Esophagus muscularis mucosa (tissue), 4 donors: ENCODE measurements at regions of chr20 and their contacts with region 1.

Region 1: GRCh38 chr20:25294459-25295385 is 46.8 kb downstream of the PYGB start:
- DNase-seq: no peak
- H3K4me3 ChIP-seq: no peak overlapping the region
- H3K27ac ChIP-seq: peak overlapping the region; percentile 72 to 77 (median 74)
- H3K4me1 ChIP-seq: peaks cover 42 to 68% (median 57%) of the 10 kb centered on the region in 4 donors
- H3K27me3 ChIP-seq: no peaks in the 10 kb centered on the region
- CTCF ChIP-seq: peak; percentile 61 to 69 (median 68)
- EP300 ChIP-seq: no peak
- POLR2A ChIP-seq: no peak

Region 2: DNA sequence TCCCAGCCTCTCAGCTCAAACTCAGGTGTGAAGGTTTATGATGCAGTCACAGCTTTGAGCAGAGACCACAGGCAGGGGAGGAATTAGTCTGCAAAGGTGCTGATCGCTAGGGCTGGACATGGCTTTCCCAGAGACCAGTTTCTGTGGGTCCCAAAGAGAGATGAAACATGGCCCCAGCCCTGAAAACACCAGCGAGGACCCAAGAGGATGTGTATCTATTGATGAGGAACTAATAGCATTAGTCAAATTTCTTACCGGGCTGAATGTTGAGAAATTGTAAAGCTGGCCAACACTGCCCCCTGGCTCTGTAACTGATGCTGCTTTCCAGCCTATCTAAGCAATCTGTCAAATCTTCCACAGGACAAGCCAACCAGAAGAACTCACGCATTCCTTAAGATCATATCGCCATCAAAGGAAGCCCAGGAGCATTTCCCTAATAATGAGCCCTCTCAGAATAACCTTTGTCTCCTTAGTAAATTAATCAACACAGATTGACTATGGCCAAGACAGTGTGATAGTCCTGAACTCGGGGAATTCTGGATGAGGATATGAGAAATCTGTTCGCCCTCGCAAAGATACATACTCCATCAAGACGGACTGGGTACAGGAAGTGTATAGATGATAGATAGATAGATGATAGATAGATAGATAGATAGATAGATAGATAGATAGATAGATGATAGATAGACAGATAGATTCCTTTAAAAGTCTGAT is 228.9 kb before region 1 on chr20:
- intact Hi-C with region 1: loop called (anchors 10 kb)
- DNase-seq: no peak
- H3K4me3 ChIP-seq: no peak overlapping the region
- H3K27ac ChIP-seq: no peak overlapping the region
- H3K4me1 ChIP-seq: peaks cover 8 to 15% (median 10%) of the 10 kb centered on the region in 4 donors
- H3K27me3 ChIP-seq: peaks cover 0 to 10% (median 0%) of the 10 kb centered on the region in 4 donors
- CTCF ChIP-seq: peak; percentile 78 to 86 (median 81)
- EP300 ChIP-seq: no peak
- POLR2A ChIP-seq: no peak

Region 3: GRCh38 chr20:25389401-25389852 is 94.7 kb after region 1 on chr20:
- intact Hi-C with region 1: no loop called
- DNase-seq: no peak
- H3K4me3 ChIP-seq: peak overlapping the region; percentile 77 to 92 (median 90)
- H3K27ac ChIP-seq: peak overlapping the region; percentile 92 to 98 (median 94)
- H3K4me1 ChIP-seq: peaks cover 4 to 23% (median 20%) of the 10 kb centered on the region in 4 donors
- H3K27me3 ChIP-seq: no peaks in the 10 kb centered on the region
- CTCF ChIP-seq: no peak
- EP300 ChIP-seq: no peak
- POLR2A ChIP-seq: no peak